ENCODE measurements at regions of chr2 and their contacts with region 1.

Region 1: DNA sequence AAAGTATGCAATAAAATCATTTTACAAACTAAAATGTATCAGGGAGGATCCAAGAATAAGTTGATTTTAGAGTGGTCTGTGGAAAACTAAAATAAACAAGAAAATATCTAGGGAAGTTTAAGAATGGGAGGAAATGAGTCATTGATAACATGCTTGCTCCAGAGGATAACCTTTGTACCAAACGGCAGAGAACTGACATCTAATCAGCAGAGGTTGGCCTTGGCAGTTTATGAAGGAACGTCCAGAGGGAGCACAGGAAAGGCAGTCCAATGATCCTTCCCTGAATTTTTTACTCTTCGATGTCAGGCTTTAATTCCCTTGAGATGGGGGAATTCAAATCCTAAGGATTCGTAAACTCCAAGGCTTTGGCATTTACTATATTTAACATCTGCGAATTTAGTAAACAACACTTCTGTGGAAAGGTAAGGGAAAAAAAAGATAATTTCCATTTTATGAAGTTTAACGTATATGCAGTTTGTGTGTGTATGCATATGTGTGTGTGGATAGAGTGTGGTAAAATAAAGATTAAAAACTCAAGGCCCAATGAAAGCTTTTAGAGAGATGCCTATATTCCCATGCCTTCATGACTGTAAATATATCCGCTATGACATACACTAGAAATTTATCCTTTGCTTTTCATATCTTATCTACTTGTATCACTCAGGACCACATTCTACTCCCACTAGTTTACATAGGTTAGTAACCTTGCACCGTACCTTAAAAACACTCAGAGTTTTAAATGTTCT is 8.7 kb upstream of the INPP1 start:
- DNase-seq: no peak
- H3K4me3 ChIP-seq: no peak overlapping the region
- H3K27ac ChIP-seq: peak overlapping the region; percentile 69 to 73
- H3K4me1 ChIP-seq: peaks cover 0 to 2% of the 10 kb centered on the region in 2 donors
- H3K27me3 ChIP-seq: no peaks in the 10 kb centered on the region
- CTCF ChIP-seq: no peak

Region 2: GRCh38 chr2:190350371-190350770 is 15.7 kb after region 1 on chr2:
- intact Hi-C with region 1: no loop called
- DNase-seq: no peak
- H3K4me3 ChIP-seq: no peak overlapping the region
- H3K27ac ChIP-seq: no peak overlapping the region
- H3K4me1 ChIP-seq: peaks cover 0 to 3% of the 10 kb centered on the region in 2 donors
- H3K27me3 ChIP-seq: no peaks in the 10 kb centered on the region
- CTCF ChIP-seq: no peak

Region 3: DNA sequence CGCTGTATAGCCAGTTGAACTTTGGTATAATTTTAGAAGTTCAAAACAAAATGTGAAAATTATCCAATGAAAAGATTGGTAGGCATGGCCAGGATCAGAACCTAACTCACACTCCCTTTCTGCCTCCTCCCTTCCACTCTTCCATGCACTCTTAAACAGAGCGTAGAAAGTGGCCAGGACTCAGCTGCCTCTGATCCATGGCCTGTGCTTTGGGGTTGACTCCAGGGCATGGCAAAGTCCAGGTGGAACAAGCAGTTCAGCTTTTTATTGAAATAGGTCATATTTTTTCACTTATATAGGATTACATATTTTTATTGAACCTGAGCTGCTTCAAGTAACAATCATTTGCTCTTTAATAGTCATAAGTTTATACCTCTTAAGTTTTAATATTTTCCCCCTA is 35.0 kb after region 1 on chr2:
- intact Hi-C with region 1: loop called (anchors 5 kb)
- DNase-seq: no peak
- H3K4me3 ChIP-seq: no peak overlapping the region
- H3K27ac ChIP-seq: no peak overlapping the region
- H3K4me1 ChIP-seq: peaks cover 0 to 5% of the 10 kb centered on the region in 2 donors
- H3K27me3 ChIP-seq: no peaks in the 10 kb centered on the region
- CTCF ChIP-seq: no peak